H1 (cell line): ENCODE measurements at regions of chr10 and their contacts with region 1.

Region 1: DNA sequence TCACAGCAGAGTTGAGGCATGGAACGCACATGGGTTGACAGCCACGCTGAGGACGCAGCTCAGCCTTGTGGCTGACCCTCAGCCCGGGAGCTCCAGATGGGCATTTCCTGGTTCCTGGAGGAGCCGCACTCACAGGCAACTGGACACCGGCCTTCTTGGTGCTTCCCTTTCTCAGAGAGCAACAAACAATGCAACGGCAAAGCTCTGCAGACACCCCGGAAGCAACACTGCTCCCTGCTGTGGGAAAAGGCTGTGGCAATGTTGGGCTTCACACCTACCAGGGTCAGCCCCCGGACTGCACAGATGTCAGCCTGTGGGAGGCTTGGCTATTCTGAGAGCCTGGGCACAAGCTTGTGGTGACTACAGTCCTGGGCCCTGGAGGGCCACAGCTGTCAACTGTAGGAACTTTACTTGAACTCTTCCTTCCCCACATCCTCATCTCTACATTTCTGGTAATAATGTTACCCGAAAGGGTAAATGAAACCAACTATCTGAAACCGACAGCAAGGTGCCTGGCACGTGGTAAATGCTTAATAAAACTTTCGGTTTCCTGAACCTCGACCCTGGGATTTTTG is 597.5 kb upstream of the MKI67 start:
- DNase-seq: no peak
- H3K4me3 ChIP-seq: no peak overlapping the region
- H3K27ac ChIP-seq: no peak overlapping the region
- H3K4me1 ChIP-seq: peaks cover 0 to 5% (median 2%) of the 10 kb centered on the region in 4 experiments; a peak in 4 of 7 replicates
- H3K27me3 ChIP-seq: no peaks in the 10 kb centered on the region
- CTCF ChIP-seq: no peak
- EP300 ChIP-seq: no peak
- POLR2A ChIP-seq: no peak
- RAD21 ChIP-seq: no peak

Region 2: DNA sequence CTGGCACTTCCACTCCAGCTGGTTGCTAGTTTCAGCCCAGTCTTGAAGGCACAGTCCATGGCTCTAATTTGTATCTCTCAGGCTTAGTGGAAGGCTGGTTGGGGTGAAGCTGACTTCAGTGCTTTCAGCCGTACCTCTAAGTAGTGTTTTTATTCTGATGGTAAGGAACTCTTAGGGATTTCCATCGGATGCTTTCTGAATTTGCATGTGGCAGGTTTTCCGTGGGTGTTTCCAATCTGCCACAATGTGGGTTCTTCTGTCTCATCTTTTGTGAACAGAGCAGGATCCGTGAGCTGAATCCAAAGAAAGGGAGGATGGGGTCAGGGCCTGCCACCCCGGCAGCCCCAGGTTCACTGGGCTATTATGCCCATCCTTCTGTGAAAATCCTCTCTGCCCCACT is 10.4 kb after region 1 on chr10:
- CTCF ChIA-PET with region 1: interaction called, 13 read pairs
- POLR2A ChIA-PET with region 1: no interaction called
- DNase-seq: no peak
- H3K4me3 ChIP-seq: no peak overlapping the region
- H3K27ac ChIP-seq: no peak overlapping the region
- H3K4me1 ChIP-seq: no peaks in the 10 kb centered on the region
- H3K27me3 ChIP-seq: no peaks in the 10 kb centered on the region
- CTCF ChIP-seq: no peak
- EP300 ChIP-seq: no peak
- POLR2A ChIP-seq: no peak
- RAD21 ChIP-seq: no peak

Region 3: DNA sequence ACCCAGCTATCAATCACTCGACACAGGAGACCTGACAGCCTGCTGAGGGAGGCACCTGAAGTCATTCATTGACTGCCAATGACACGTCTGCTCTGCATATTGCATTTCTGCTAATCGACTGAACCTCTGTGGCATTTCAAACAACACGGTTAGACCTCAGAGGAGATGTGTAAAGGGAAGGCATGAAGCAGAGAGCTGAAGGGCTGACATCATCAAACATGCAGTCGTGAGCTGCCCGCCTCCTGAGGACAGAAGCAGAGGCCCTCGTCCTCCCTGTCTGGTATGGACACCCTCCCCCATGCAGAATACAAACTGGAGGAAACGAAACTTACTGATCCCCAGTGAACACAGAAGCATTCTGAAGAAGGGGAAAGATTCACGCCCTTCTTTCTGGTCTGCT is 280.7 kb after region 1 on chr10:
- CTCF ChIA-PET with region 1: no interaction called
- POLR2A ChIA-PET with region 1: no interaction called
- DNase-seq: no peak
- H3K4me3 ChIP-seq: no peak overlapping the region
- H3K27ac ChIP-seq: no peak overlapping the region
- H3K4me1 ChIP-seq: no peaks in the 10 kb centered on the region
- H3K27me3 ChIP-seq: no peaks in the 10 kb centered on the region
- CTCF ChIP-seq: no peak
- EP300 ChIP-seq: no peak
- POLR2A ChIP-seq: no peak
- RAD21 ChIP-seq: no peak